ENCODE measurements at regions of chr3 and their contacts with region 1.

Region 1: DNA sequence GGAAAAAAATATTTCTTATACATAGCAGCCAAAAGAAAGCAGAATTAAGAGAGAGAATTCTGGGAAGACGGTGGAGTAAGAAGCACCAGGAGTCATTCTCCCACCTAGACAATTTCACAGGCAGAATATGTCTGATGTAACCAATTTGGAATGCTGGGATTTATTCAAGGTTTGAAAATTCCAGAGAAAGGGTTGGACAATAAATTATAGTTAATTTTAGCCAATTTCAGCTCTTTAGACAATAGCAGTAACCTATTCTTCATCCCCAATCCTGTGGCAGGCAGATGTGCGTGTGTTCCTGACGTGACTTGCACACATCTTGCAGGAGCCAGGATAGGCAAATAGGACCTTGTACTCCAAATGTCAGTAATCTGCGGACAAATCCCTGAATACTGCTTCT is 541.0 kb upstream of the NAALADL2 start:
- DNase-seq: no peak
- H3K4me3 ChIP-seq: no peak overlapping the region
- H3K27ac ChIP-seq: no peak overlapping the region
- H3K4me1 ChIP-seq: no peaks in the 10 kb centered on the region
- H3K27me3 ChIP-seq: no peaks in the 10 kb centered on the region
- CTCF ChIP-seq: no peak

Region 2: GRCh38 chr3:174342941-174343501 is 24.8 kb after region 1 on chr3:
- CTCF ChIA-PET with region 1: interaction called, 18 read pairs
- POLR2A ChIA-PET with region 1: no interaction called
- intact Hi-C with region 1: no loop called
- DNase-seq: no peak
- H3K4me3 ChIP-seq: no peak overlapping the region
- H3K27ac ChIP-seq: no peak overlapping the region
- H3K4me1 ChIP-seq: no peaks in the 10 kb centered on the region
- H3K27me3 ChIP-seq: no peaks in the 10 kb centered on the region
- CTCF ChIP-seq: no peak

Region 3: DNA sequence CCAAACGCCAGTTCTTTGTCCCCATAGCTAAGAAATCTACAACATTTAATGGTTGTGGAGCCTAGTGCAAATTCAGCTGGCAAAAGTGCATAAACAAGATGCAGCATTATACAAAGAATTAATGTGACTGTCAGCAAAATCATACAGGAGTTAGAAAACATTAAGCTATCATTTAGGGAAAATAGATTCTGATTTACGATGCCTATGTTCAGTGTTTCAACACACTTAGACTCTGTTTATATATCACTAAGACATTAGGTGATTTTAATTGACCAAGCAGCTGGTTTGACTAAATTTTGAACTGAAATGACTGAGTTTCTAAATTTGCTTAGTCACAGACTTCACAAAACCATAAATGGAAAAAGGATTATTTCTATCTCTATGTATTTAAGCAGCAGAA is 1802.3 kb after region 1 on chr3:
- CTCF ChIA-PET with region 1: no interaction called
- POLR2A ChIA-PET with region 1: interaction called, 15 read pairs
- intact Hi-C with region 1: no loop called
- DNase-seq: no peak
- H3K4me3 ChIP-seq: no peak overlapping the region
- H3K27ac ChIP-seq: no peak overlapping the region
- H3K4me1 ChIP-seq: no peaks in the 10 kb centered on the region
- H3K27me3 ChIP-seq: no peaks in the 10 kb centered on the region
- CTCF ChIP-seq: no peak